CD4-positive, alpha-beta T cell (primary cell): ENCODE measurements at regions of chr1 and their contacts with region 1.

Region 1: DNA sequence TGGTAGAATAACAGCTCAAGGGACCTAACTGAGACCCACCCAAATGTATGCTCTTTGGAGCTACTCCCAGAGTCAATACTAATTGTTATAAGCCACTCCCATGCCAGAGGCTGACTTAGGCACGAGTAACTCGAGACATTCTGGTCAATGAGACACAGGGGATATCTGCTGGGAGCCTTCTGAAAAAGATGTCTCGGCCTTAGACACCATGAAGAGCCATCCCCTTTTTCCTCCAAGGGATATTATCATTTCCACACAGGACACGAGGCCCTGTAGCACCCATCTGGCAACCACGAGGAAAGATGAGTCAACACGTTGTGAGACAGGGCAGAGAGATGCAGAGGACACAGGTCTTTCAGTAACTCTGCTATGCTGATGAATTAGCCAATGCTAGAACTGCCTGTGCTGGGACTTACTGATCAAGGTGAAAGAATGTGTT is 30.7 kb downstream of the ITPKB start:
- DNase-seq: peak in 2 of 14 experiments; percentile 51 to 58
- ATAC-seq: peak; percentile 13
- H3K4me3 ChIP-seq: no peak overlapping the region
- H3K4me3 Mint-ChIP-seq: peak overlapping the region; percentile 87
- H3K27ac ChIP-seq: peak overlapping the region; percentile 31 to 75
- H3K27ac Mint-ChIP-seq: peak overlapping the region; percentile 95
- H3K4me1 ChIP-seq: peaks cover 79% of the 10 kb centered on the region
- H3K4me1 Mint-ChIP-seq: peaks cover 95% of the 10 kb centered on the region
- H3K27me3 ChIP-seq: no peaks in the 10 kb centered on the region
- H3K27me3 Mint-ChIP-seq: peaks cover 11% of the 10 kb centered on the region
- CTCF ChIP-seq: peak; percentile 18

Region 2: DNA sequence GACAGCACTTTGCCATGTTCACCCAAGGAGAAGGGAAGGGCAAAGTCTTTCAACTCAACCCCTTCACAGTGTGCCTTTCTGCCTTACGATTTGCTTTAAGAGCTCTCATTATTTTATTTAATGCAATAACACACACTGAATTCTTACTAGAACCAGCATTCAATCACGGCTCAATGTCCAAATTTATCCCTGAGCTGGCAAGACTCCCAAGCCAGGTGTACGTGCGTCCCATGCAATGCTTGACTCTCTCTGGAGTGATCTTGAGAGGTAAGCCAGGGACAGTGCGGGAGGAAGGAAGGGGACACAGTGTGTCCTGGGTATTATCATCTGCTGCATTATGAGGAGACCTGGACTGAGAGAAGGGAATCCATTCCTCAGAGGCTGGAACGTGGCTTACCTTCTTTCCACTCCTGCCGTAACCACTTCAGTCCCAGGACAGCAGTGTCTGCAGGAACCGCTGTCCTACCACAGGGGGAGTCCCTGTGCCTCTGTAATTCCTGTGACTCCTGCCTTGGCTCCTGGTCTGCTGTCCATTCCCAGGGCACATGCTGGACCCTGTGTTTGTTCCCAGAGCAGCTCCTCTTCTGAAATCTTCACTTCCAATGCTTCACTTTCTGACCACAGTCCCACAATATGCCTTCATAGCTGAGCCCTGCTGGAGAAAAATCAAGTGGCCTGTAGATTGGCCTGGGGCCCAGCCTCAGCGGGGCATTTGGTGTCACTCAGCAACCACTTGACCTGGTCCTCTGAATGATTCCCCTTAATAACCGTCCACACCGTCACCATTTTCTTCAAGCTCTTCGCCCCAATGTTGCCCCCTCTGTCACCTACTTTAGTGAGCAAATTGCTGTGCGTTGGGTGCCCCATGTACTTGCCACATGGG is 188.4 kb before region 1 on chr1:
- CTCF ChIA-PET with region 1: no interaction called
- POLR2A ChIA-PET with region 1: no interaction called
- intact Hi-C with region 1: no loop called
- DNase-seq: no peak
- ATAC-seq: no peak
- H3K4me3 ChIP-seq: no peak overlapping the region
- H3K4me3 Mint-ChIP-seq: no peak overlapping the region
- H3K27ac ChIP-seq: no peak overlapping the region
- H3K27ac Mint-ChIP-seq: no peak overlapping the region
- H3K4me1 ChIP-seq: no peaks in the 10 kb centered on the region
- H3K4me1 Mint-ChIP-seq: no peaks in the 10 kb centered on the region
- H3K27me3 ChIP-seq: peaks cover 0 to 9% of the 10 kb centered on the region in 2 experiments
- H3K27me3 Mint-ChIP-seq: peaks cover 25% of the 10 kb centered on the region
- CTCF ChIP-seq: no peak

Region 3: DNA sequence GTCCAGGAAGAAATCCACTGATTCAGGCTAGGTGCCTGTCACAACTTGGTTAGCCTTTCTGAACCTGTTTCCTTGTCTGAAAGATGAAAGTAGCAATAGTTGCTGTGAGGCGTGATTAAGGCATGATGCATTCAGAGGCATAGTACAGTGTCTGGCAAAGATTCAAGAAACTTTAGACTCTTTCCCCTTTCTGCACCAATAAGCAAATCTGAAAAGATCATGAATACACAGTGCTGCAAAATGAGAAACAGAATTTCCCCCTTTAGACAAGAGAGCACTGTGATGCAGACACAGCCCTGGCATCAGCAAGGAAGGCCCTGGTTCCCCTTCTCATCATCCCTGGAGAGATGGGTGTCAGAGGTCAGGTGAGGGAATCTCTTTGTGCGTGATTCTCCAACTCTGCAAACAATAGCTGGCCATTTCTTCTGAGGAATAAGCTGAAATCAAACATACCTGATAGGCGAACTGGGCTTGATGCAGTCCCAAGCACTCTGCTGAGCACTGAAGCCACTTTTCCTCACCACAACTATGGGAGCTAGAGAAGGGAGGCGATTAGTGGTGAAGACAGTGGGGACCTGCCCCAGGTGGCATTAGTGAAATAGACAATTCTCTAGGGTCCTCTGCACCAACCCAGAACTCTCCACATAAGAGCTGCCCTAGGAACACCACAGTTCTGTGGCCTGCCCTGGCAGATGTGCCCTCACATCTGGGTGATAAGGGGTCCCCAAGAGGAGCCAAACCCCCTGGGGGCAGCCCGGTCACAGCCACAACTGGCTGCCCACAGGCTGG is 11.0 kb before region 1 on chr1:
- CTCF ChIA-PET with region 1: interaction called, 6 read pairs
- POLR2A ChIA-PET with region 1: interaction called, 11 read pairs
- intact Hi-C with region 1: loop called in 1 of 2 experiments (anchors 2 kb)
- DNase-seq: peak in 3 of 14 experiments; percentile 41 to 65 (median 63)
- ATAC-seq: peak; percentile 77
- H3K4me3 ChIP-seq: no peak overlapping the region
- H3K4me3 Mint-ChIP-seq: peak overlapping the region; percentile 78
- H3K27ac ChIP-seq: peak overlapping the region; percentile 50 to 68
- H3K27ac Mint-ChIP-seq: peak overlapping the region; percentile 98
- H3K4me1 ChIP-seq: peaks cover 90% of the 10 kb centered on the region
- H3K4me1 Mint-ChIP-seq: peaks cover 93% of the 10 kb centered on the region
- H3K27me3 ChIP-seq: no peaks in the 10 kb centered on the region
- H3K27me3 Mint-ChIP-seq: no peaks in the 10 kb centered on the region
- CTCF ChIP-seq: no peak

Region 4: GRCh38 chr1:226723657-226724532 is 15.5 kb after region 1 on chr1:
- CTCF ChIA-PET with region 1: interaction called, 4 read pairs
- POLR2A ChIA-PET with region 1: interaction called, 3 read pairs
- intact Hi-C with region 1: loop called in 1 of 2 experiments (anchors 1 kb)
- DNase-seq: no peak
- ATAC-seq: peak; percentile 13
- H3K4me3 ChIP-seq: peak overlapping the region; percentile 17
- H3K4me3 Mint-ChIP-seq: peak overlapping the region; percentile 95
- H3K27ac ChIP-seq: peak overlapping the region; percentile 47
- H3K27ac Mint-ChIP-seq: peak overlapping the region; percentile 95
- H3K4me1 ChIP-seq: peaks cover 94% of the 10 kb centered on the region
- H3K4me1 Mint-ChIP-seq: peaks cover 97% of the 10 kb centered on the region
- H3K27me3 ChIP-seq: no peaks in the 10 kb centered on the region
- H3K27me3 Mint-ChIP-seq: no peaks in the 10 kb centered on the region
- CTCF ChIP-seq: no peak